ENCODE measurements at regions of chr10 and their contacts with region 1.

Region 1: GRCh38 chr10:112434988-112435619 is 11.6 kb downstream of the ZDHHC6 start:
- DNase-seq: peak in 1 of 2 experiments; percentile 38
- H3K4me3 ChIP-seq: no peak overlapping the region
- H3K27ac ChIP-seq: no peak overlapping the region
- H3K4me1 ChIP-seq: no peaks in the 10 kb centered on the region
- H3K27me3 ChIP-seq: no peaks in the 10 kb centered on the region
- CTCF ChIP-seq: peak; percentile 70

Region 2: DNA sequence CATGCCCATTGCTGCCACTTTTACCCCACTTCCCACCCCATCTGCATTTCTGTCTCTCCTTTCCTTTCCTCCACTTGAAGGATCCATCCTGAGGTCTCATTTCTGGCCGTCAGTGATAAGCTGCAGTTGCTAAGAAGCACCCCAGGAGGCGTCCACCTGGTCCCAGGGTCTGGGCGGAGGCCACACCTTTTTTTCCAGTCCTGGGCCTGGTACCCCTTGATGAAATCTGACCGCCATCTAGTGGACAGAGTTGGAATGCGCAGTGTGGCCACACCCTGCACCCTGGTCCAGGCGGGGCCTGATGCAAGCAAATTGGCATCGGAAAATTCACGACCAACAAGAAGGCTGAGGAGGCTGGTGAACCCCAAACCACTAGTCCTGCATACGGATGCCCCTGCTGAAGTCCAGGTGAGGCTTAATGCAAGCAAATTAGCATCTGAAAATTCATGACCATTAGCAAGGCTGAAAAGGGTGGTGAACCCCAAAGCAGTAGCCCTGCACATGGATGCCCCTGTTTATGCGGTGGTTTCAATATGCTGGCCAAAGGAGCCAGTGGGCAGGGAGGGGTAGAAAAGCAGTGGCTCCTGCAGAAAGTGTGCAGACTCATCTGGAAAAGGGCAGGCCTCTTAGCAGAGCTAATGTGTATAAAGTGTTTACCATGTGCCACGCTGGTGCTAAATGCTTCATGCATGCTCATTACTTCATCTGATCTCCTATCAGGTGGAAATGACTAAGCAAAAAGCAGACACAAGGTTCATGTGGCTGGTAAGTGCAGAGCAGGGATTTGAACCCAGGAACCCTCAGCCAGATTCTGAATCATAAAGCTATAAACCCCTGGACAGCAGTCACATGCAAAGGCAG is 294.8 kb before region 1 on chr10:
- CTCF ChIA-PET with region 1: interaction called, 4 read pairs
- POLR2A ChIA-PET with region 1: no interaction called
- intact Hi-C with region 1: loop called (anchors 10 kb)
- DNase-seq: peak; percentile 69 to 71
- H3K4me3 ChIP-seq: no peak overlapping the region
- H3K27ac ChIP-seq: no peak overlapping the region
- H3K4me1 ChIP-seq: no peaks in the 10 kb centered on the region
- H3K27me3 ChIP-seq: no peaks in the 10 kb centered on the region
- CTCF ChIP-seq: peak; percentile 82

Region 3: DNA sequence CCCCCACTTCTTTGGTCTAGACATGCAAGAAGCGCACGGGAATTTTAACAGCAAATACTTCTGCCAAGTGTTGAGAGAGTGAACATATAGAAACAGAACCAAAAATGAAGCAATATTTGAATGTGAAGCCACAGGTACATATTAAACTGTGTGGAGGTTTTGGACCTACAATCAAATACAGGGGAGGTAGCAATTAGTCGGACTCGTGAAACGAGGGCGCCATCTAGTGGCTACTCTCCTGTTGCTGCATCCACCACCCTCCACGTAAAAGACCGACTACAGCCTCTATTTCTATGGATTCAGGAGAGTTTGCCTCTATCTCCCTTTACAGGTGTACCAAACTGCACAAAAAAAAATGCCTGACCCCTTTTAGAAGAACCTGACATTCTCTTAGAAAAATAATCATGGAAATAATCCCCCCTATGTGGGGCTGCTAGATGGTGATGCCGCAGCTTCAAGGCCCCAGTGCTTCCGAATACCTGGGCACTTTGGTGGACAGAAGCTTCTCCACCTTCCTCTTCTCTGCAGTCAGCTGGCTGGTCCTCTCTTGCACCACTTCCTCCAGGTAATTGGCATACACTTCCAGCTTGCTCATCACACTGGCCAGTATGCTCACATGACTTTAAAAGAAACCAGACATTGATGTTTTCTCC is 120.2 kb before region 1 on chr10:
- CTCF ChIA-PET with region 1: no interaction called
- POLR2A ChIA-PET with region 1: no interaction called
- intact Hi-C with region 1: loop called (anchors 5 kb)
- DNase-seq: peak in 1 of 2 experiments; percentile 58
- H3K4me3 ChIP-seq: no peak overlapping the region
- H3K27ac ChIP-seq: no peak overlapping the region
- H3K4me1 ChIP-seq: no peaks in the 10 kb centered on the region
- H3K27me3 ChIP-seq: no peaks in the 10 kb centered on the region
- CTCF ChIP-seq: peak; percentile 83

Region 4: DNA sequence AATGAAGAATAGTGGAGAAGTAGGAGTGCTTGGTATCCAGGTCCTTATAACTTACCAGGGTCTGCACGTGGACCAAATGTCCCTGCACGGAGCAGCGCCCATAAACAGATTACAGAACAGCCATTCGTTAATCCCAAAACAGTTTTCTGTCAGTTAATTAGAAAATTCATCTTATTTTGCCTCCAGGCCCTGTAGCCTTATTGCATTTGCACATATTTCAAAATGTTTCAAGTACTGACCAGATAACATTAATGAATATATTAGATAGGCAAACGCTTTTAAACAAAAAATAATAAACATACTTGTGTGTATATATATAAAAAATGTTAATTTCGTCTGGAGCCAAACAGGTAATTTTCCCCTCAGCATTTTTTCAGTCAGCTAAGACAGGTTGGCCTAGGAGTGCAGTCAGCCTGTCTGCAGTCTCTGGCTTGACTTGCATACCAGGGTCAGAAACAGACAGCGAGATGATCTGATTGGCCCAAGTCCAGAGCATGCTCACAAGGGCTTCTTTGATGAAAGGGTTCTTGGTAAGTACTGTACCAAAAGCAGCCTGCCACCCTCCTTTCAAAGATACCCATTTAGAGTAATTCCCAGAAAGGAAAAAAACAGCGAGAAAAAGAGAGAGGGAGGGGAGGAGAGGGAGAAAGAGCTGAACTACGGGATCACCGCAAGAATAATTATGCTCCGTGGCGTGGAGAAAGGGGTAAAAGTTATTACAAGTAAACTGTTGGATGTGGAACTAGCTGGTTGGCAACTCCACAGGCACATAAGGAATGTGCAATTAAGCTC is 320.5 kb after region 1 on chr10:
- CTCF ChIA-PET with region 1: no interaction called
- POLR2A ChIA-PET with region 1: no interaction called
- intact Hi-C with region 1: no loop called
- DNase-seq: no peak
- H3K4me3 ChIP-seq: no peak overlapping the region
- H3K27ac ChIP-seq: no peak overlapping the region
- H3K4me1 ChIP-seq: peaks cover 14% of the 10 kb centered on the region
- H3K27me3 ChIP-seq: no peaks in the 10 kb centered on the region
- CTCF ChIP-seq: no peak